ENCODE measurements at regions of chr6 and their contacts with region 1.

Region 1: GRCh38 chr6:125153391-125154117 is at the start of gene TPD52L1:
- DNase-seq: peak; percentile 76
- ATAC-seq: peak; percentile 92
- H3K4me3 ChIP-seq: peak within 1 kb of the TSS; percentile 75 to 86
- H3K27ac ChIP-seq: peak within 1 kb of the TSS; percentile 82
- H3K4me1 ChIP-seq: peaks cover 15 to 41% of the 10 kb centered on the region in 2 experiments
- H3K27me3 ChIP-seq: no peaks in the 10 kb centered on the region
- CTCF ChIP-seq: peak; percentile 79 to 92 (median 87)
- POLR2A ChIP-seq: no peak
- RAD21 ChIP-seq: peak; percentile 75
- total RNA-seq, gene TPD52L1: 64.1 TPM

Region 2: DNA sequence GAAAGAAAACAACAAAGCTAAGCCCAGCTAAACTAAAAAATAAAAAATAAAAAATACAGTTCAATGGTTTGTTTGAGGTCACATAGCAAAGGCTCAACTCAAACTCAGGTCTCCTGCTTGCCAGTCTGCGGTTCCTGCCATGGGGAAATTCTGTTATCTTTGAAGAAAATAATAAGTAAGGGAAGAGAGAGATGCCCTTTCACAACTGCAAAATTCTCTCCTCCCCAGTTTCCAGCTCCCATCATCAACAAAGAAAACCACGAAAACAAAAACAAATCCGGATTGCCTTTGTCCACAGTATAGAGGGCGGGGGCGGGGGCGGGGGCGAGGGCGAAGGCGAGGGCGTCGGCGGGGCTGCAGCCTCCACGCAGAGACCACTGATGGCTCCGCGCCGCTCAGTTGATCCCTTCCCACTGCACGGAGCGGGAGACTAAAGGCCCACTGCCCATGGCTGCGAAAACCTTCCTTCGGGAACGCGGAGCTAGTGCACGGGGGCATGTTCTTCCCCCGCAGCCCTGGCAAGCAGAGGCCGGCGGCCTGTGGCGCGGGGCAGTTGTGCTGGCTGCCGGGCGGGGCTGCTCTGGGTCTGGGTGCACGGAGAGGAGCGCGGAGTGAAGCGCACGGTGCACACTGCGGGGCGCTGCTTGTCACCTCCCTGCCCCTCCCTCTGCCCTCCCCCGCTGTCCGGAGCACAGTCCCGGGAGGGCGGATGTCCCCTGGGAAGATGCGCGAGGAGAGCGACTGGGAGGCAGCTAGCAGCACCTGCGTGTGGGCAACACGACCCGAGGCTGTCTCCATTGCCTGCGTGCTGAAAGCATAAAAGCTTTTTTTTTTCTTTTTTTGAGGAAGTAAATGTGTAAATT is 54.1 kb before region 1 on chr6:
- CTCF ChIA-PET with region 1: no interaction called
- POLR2A ChIA-PET with region 1: no interaction called
- RAD21 ChIA-PET with region 1: no interaction called
- intact Hi-C with region 1: loop called (anchors 2 kb)
- DNase-seq: peak; percentile 49
- ATAC-seq: peak; percentile 97
- H3K4me3 ChIP-seq: peak overlapping the region; percentile 47 to 58
- H3K27ac ChIP-seq: no peak overlapping the region
- H3K4me1 ChIP-seq: peaks cover 9 to 48% of the 10 kb centered on the region in 2 experiments; a peak in 3 of 4 replicates
- H3K27me3 ChIP-seq: no peaks in the 10 kb centered on the region
- CTCF ChIP-seq: 0 out of 6 replicates have a peak, but pooled peaks of 1 of the 3 experiments have one; percentile 10
- POLR2A ChIP-seq: no peak
- RAD21 ChIP-seq: no peak

Region 3: GRCh38 chr6:125191916-125192609 is 38.5 kb after region 1 on chr6:
- CTCF ChIA-PET with region 1: interaction called, 9 read pairs
- POLR2A ChIA-PET with region 1: no interaction called
- RAD21 ChIA-PET with region 1: interaction called in 1 of 2 experiments, 3 read pairs
- intact Hi-C with region 1: loop called (anchors 1 kb)
- DNase-seq: peak; percentile 58
- ATAC-seq: peak; percentile 87
- H3K4me3 ChIP-seq: no peak overlapping the region
- H3K27ac ChIP-seq: no peak overlapping the region
- H3K4me1 ChIP-seq: peaks cover 18 to 44% of the 10 kb centered on the region in 2 experiments; a peak in 3 of 4 replicates
- H3K27me3 ChIP-seq: no peaks in the 10 kb centered on the region
- CTCF ChIP-seq: peak; percentile 61 to 83 (median 79); a peak in 5 of 6 replicates
- POLR2A ChIP-seq: no peak
- RAD21 ChIP-seq: peak; percentile 70

Region 4: DNA sequence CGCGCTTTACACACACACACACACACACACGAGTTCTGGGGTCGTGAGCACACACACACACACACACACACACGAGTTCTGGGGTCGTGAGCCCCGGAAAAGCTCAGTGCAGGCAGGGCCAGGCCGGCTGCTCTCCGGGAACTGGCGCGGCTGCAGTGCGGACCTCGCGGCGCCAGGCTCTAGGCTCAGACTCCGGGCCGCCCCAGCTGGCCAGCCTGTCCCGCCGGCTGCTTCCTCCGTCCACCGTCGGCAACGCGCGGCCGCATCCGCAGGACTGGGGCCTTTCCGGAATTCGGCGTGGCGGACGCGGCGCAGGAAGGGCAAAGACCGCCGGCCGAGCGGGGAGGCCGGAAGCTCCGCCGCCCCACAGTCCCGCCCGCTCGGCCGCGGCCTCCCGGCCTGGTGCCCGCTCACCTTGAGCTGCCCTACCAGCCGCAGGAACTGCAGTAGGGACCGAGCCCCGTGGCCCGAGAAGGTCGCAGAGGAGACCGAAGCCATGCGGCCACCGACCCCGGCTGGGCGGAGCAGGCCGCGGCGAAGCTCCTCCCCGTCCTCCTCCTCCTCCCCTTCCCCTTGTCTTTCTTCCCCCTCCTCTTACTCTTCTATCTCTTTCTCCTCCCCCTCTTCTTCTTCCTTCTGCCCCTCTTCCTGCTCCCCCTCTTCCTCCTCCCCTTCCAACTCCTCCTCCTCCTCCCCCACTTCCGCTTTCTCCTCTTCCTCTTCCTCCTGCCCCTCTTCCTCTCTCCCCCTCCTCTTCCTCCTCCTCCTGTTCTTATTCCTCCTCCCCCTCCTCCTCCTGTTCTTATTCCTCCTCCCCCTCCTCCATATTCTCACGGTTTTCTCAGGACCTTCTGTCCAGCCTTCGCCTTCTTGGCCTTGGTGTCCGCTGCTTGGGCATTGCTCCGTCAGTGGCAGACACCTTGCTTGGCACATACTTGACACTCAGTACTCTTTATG is 148.2 kb after region 1 on chr6 and contains the start of gene HDDC2:
- CTCF ChIA-PET with region 1: interaction called, 3 read pairs
- POLR2A ChIA-PET with region 1: interaction called, 3 read pairs
- RAD21 ChIA-PET with region 1: no interaction called
- intact Hi-C with region 1: loop called (anchors 2 kb)
- DNase-seq: peak; percentile 28
- ATAC-seq: peak; percentile 88
- H3K4me3 ChIP-seq: peak within 1 kb of the TSS; percentile 79 to 88
- H3K27ac ChIP-seq: peak within 1 kb of the TSS; percentile 86
- H3K4me1 ChIP-seq: peaks cover 0 to 16% of the 10 kb centered on the region in 2 experiments; a peak in 3 of 4 replicates
- H3K27me3 ChIP-seq: no peaks in the 10 kb centered on the region
- CTCF ChIP-seq: no peak
- POLR2A ChIP-seq: peak; percentile 89
- RAD21 ChIP-seq: 0 out of 2 replicates have a peak, but pooled peaks have one; percentile 1
- total RNA-seq, gene HDDC2: 95.6 TPM

Region 5: GRCh38 chr6:125759184-125759902 is 605.8 kb after region 1 on chr6:
- CTCF ChIA-PET with region 1: no interaction called
- POLR2A ChIA-PET with region 1: no interaction called
- RAD21 ChIA-PET with region 1: no interaction called
- intact Hi-C with region 1: loop called (anchors 10 kb)
- DNase-seq: peak; percentile 33
- ATAC-seq: peak; percentile 97
- H3K4me3 ChIP-seq: no peak overlapping the region
- H3K27ac ChIP-seq: no peak overlapping the region
- H3K4me1 ChIP-seq: peaks cover 0 to 6% of the 10 kb centered on the region in 2 experiments; a peak in 1 of 4 replicates
- H3K27me3 ChIP-seq: peaks cover 55% of the 10 kb centered on the region
- CTCF ChIP-seq: peak; percentile 53 to 85 (median 75); a peak in 5 of 6 replicates
- POLR2A ChIP-seq: no peak
- RAD21 ChIP-seq: peak; percentile 48

Measured in HCT116 (cell line).